ENCODE measurements at regions of chr2 and their contacts with region 1.

Region 1: DNA sequence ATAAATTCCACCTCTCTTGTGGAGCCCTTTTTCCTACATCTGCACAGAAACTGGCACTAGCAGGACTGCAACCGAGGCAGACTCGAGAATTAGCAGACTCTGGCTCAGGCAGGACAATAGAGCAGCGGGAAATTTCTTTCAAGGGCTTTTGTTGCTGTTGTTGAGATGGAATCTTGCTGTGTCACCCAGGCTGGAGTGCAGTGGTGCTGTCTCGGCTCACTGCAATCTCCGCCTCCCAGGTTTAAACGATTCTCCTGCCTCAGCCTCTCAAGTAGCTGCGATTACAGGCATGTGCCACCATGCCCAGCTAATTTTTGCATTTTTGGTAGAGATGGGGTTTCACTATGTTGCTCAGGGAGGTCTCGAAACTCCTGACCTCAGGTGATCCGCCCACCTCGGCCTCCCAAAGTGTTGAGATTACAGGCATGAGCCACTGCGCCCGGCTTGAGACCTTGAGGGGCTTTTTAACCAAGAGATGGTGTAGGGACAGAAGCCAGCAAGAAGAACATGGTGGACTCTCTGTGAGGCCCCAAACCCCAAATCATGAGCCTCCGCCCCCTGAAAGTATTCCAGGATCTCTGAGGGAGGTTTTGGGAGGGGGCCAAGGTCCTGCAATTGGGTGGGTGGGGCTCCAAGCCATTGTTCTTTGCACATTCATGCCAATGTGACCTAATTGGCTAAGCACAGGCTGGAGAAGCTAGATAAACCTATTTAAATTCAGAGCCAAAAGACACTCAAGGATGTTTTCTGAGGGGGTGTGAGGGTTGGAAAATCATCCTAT is 68.4 kb upstream of the MSH2 start:
- DNase-seq: no peak
- H3K4me3 ChIP-seq: no peak overlapping the region
- H3K27ac ChIP-seq: no peak overlapping the region
- H3K4me1 ChIP-seq: peaks cover 13% of the 10 kb centered on the region
- H3K27me3 ChIP-seq: no peaks in the 10 kb centered on the region
- CTCF ChIP-seq: no peak

Region 2: DNA sequence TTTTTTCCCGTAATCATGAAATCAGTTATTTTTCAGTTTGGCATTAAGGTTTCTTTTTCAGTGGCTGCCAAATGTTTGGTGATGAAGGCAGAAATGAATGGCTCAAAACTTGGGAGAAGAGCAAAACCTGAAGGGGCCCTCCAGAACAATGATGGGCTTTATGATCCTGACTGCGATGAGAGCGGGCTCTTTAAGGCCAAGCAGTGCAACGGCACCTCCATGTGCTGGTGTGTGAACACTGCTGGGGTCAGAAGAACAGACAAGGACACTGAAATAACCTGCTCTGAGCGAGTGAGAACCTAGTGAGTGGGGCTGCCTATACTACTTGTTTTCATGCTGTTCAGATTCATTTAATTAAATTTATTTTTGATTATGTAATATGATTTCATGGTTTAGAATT is 39.2 kb after region 1 on chr2:
- CTCF ChIA-PET with region 1: interaction called, 3 read pairs
- POLR2A ChIA-PET with region 1: interaction called, 32 read pairs
- intact Hi-C with region 1: loop called (anchors 1 kb)
- DNase-seq: peak in 1 of 2 experiments; percentile 41
- H3K4me3 ChIP-seq: no peak overlapping the region
- H3K27ac ChIP-seq: no peak overlapping the region
- H3K4me1 ChIP-seq: peaks cover 21% of the 10 kb centered on the region
- H3K27me3 ChIP-seq: no peaks in the 10 kb centered on the region
- CTCF ChIP-seq: 0 out of 2 replicates have a peak, but pooled peaks have one; percentile 21

Measured in PC-9 (cell line).